ENCODE measurements at regions of chr6 and their contacts with region 1.

Region 1: DNA sequence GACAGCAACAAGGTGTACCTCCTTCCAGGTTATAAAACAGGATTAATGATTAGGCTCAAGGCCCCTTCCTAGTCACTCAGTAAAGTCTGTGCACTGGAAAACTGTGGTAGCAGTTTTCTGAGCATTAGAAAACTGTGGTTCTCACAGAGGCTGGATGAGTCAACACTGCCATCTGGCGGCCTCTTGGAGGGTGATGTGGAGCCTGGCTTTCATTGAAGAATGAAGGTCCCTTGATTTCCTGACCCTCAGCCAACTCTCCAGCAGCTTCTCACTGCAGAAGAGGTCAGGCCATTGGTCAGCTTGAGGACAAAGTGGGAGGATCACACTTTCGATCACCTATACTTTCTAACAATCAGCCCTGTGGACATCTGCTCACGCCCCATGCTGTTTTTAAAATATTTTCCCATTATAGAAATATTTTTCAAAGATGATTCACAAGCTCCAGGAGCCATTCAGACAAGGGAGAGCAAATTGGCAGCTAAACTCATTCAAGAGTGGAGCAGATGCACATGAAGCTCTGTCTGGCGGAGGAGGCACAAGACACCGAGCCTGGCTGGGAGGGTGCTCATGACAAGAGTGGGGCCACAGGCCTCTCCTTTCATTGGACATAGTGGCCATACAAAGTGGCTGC is 23.2 kb downstream of the PSMB1 start:
- DNase-seq: peak; percentile 71
- H3K4me3 Mint-ChIP-seq: no peak overlapping the region
- H3K27ac Mint-ChIP-seq: no peak overlapping the region
- H3K4me1 Mint-ChIP-seq: peaks cover 9% of the 10 kb centered on the region
- H3K27me3 Mint-ChIP-seq: peaks cover 10% of the 10 kb centered on the region

Region 2: DNA sequence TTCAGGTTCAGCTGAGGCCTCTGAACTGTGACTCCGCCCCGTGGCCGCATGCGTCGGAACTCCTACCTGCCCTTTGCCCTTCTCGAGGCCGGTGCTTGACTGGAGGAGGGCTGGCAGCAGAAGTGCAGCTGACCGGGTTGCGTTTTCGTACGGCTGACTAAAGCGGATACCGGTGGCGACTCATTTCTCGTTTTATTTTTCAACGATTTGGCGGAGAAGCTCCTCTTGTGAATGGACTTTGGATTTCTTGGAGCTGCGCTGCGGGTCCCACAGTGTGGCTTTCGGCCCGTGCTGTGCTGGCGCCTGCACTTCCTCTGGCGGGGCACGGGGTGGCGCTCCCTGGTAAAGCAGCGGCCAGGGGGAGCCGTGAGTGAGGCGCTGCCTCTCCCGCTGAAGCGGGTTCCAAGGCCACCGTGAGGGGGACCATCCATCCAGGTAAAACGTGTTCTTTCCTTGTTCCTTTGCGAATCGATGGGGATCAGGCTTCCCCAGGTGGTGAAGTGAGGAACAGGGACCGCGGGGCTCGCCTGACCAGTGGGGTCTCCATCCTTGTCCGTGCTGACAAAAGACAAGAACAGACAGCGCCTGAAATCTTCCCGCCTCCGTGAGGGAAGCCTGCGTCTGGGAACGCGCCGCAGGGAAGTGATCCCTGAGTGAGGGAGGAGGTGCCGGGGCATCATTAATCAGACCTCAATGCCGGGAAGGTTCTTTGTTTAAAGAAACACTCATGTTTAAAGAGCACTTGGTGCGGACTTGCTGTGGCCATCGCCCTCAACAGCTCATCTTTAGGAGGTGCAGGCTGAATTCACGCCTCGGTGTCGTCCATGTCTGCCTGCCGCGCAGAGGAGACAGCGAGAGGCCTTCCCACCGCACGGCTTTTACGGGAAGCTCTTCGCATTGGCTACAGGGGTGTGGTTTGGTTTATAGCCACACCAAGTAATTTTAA is 739.7 kb before region 1 on chr6:
- CTCF ChIA-PET with region 1: interaction called, 13 read pairs
- POLR2A ChIA-PET with region 1: no interaction called
- DNase-seq: peak; percentile 79
- H3K4me3 Mint-ChIP-seq: peak overlapping the region; percentile 75
- H3K27ac Mint-ChIP-seq: no peak overlapping the region
- H3K4me1 Mint-ChIP-seq: peaks cover 22% of the 10 kb centered on the region
- H3K27me3 Mint-ChIP-seq: peaks cover 27% of the 10 kb centered on the region

Region 3: GRCh38 chr6:169803271-169803811 is 726.6 kb before region 1 on chr6:
- CTCF ChIA-PET with region 1: interaction called, 16 read pairs
- POLR2A ChIA-PET with region 1: no interaction called
- DNase-seq: peak; percentile 29
- H3K4me3 Mint-ChIP-seq: no peak overlapping the region
- H3K27ac Mint-ChIP-seq: no peak overlapping the region
- H3K4me1 Mint-ChIP-seq: peaks cover 42% of the 10 kb centered on the region
- H3K27me3 Mint-ChIP-seq: peaks cover 50% of the 10 kb centered on the region

Region 4: DNA sequence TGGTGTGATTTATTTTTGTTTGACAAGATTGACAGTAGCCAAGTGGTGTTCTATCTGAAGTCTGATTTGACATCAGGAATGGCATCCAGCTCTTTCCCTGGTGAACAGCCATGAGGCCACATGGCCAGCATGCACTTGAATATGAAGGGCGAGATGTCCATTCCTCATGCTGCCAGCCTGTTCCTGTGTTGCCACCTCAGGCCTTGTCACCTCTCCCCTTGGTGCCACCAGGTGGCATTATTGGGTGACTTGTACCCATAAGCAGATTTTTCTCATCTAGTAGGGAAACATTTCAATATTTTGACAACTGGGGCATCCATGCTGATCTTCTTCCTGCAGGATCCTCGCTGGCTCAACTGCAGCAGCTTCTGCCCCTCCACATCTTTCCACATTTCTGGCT is 579.4 kb before region 1 on chr6:
- CTCF ChIA-PET with region 1: interaction called, 12 read pairs
- POLR2A ChIA-PET with region 1: no interaction called
- DNase-seq: peak; percentile 40
- H3K4me3 Mint-ChIP-seq: no peak overlapping the region
- H3K27ac Mint-ChIP-seq: no peak overlapping the region
- H3K4me1 Mint-ChIP-seq: peaks cover 4% of the 10 kb centered on the region
- H3K27me3 Mint-ChIP-seq: peaks cover 8% of the 10 kb centered on the region

Region 5: DNA sequence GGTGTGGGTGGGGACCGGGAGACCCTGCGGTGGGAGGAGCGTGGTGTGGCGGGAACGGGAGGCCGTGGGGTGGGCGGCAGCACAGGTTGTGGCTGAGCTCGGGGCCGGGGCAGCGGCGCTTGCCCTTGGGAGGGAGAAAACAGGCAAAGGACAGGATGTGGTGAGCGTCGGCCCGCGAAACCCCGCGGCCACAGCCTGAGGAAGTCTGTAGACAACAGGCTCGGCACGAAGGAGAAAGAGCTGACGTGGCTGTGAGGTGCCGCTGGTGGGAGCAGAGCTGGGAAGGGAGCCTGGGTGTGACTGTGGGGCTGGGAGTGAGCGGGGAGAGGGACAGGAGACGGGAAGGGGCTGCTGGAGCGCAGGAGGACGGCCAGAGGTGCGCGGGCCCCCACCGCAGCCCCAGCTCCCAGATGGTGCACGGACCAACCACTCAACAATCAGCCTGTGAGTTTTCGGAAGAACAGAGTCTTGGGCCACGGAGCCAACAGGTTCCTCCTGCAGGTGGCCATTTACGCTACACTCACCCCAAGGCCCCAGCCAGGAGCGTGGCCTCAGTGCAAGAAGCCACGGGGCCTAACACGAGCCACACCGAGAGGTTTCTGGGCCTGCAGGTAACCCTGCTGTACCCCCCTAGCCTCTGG is 441.9 kb before region 1 on chr6:
- CTCF ChIA-PET with region 1: interaction called, 10 read pairs
- POLR2A ChIA-PET with region 1: no interaction called
- DNase-seq: peak; percentile 81
- H3K4me3 Mint-ChIP-seq: peak overlapping the region; percentile 83
- H3K27ac Mint-ChIP-seq: peak overlapping the region; percentile 96
- H3K4me1 Mint-ChIP-seq: peaks cover 38% of the 10 kb centered on the region
- H3K27me3 Mint-ChIP-seq: no peaks in the 10 kb centered on the region

Region 6: DNA sequence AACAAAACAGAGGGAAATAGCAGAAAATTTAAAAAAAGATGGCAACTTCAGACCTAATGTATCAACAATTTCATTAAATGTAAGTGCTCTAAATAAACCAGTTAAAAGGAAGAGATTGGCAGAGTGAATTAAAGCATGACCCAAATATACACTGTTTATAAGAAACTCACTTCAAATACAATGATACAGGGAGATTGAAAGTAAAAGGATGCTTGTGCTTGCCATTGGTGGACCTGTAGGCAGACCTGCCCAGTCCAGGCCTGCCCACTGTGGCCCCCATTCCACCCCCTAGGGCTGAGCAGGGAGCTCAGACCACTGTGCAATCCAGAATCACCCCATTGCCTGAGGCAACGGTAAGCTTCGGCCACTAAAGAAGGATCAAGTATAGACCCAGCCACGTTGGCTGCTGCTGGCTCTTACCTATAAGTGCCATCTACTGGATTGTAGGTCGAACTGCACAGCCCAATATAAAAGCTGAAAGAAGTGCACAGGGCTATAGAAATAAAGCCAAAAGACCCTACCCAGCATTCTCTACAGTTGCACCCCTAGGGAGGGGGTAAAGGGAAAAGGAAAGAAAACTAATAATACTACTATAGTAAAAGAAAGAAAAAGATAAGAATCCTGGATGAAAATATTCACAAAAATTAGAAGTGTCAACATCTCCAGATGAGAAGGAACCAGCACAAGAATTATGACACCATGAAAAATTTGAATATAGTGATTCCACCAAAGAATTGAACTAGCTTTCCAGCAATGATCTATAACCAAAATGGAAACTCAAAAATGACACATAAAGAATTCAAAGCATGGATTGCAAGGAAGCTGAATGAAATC is 13.0 kb before region 1 on chr6:
- CTCF ChIA-PET with region 1: interaction called, 20 read pairs
- POLR2A ChIA-PET with region 1: no interaction called
- DNase-seq: peak; percentile 37
- H3K4me3 Mint-ChIP-seq: no peak overlapping the region
- H3K27ac Mint-ChIP-seq: no peak overlapping the region
- H3K4me1 Mint-ChIP-seq: peaks cover 7% of the 10 kb centered on the region
- H3K27me3 Mint-ChIP-seq: peaks cover 60% of the 10 kb centered on the region

Measured in activated CD4-positive, alpha-beta memory T cell treated with anti-CD3 and anti-CD28 coated beads, Interleukin-2, amount 10 ng/mL, durations not matched to agents 7 days and 5 days (primary cell).